ENCODE measurements at regions of chr17 and their contacts with region 1.

Region 1: GRCh38 chr17:28763804-28764266 is 20.0 kb downstream of the TRAF4 start:
- DNase-seq: peak; percentile 61 to 85 (median 76)
- ATAC-seq: peak; percentile 89
- H3K4me3 ChIP-seq: no peak overlapping the region
- H3K4me3 Mint-ChIP-seq: no peak overlapping the region
- H3K27ac ChIP-seq: no peak overlapping the region
- H3K27ac Mint-ChIP-seq: peak overlapping the region; percentile 7
- H3K4me1 ChIP-seq: no peaks in the 10 kb centered on the region
- H3K4me1 Mint-ChIP-seq: peaks cover 8% of the 10 kb centered on the region
- H3K27me3 ChIP-seq: no peaks in the 10 kb centered on the region
- H3K27me3 Mint-ChIP-seq: no peaks in the 10 kb centered on the region
- CTCF ChIP-seq: peak; percentile 97

Region 2: DNA sequence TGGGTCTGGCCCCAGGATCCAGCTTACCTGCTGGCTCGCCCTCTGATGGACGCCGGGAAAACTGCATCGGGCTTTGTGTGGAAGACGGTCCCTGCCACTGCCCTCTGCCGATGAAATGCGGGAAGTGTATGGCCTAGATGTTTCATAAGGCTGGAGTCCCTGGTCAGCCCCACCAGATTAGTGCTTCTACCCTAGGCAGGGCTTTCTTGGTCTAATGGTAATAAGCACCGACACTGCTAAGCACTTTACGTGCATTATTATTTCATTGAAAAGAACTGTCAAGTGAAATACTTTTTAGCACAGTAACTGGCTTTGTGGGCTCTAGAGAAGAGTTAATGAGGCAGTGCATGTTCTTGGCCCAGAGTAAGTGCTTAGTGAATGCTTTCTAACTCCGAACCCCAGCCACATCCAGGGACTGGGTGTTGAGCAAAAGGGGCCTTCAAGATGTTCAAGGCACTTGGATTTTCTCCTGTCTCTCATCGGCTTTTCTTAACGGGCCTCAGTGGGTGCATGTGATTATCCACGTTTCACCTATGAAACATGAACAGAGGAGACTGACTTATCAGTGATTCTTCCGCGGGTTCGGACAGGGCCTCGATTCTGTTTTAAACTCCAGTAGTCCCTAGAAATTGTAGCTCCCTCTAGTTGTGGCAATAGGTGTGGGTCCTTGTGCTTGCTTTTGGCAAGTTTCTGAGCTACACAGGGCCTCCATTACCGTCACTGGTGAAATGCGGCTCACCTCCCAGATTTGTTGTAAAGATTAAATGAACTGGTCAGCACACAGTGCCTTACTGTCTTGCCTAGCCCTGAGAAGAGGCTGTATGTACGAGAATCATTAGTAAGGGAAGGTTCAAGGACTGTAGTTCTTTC is 13.4 kb before region 1 on chr17:
- CTCF ChIA-PET with region 1: interaction called, 24 read pairs
- POLR2A ChIA-PET with region 1: no interaction called
- intact Hi-C with region 1: no loop called
- DNase-seq: peak; percentile 82 to 94 (median 86)
- ATAC-seq: peak; percentile 90
- H3K4me3 ChIP-seq: no peak overlapping the region
- H3K4me3 Mint-ChIP-seq: peak overlapping the region; percentile 42
- H3K27ac ChIP-seq: no peak overlapping the region
- H3K27ac Mint-ChIP-seq: peak overlapping the region; percentile 70
- H3K4me1 ChIP-seq: peaks cover 27% of the 10 kb centered on the region
- H3K4me1 Mint-ChIP-seq: peaks cover 21% of the 10 kb centered on the region
- H3K27me3 ChIP-seq: no peaks in the 10 kb centered on the region
- H3K27me3 Mint-ChIP-seq: no peaks in the 10 kb centered on the region
- CTCF ChIP-seq: peak; percentile 100

Region 3: GRCh38 chr17:28842282-28843012 is 78.6 kb after region 1 on chr17 and contains the start of gene FAM222B:
- CTCF ChIA-PET with region 1: interaction called, 30 read pairs
- POLR2A ChIA-PET with region 1: interaction called, 5 read pairs
- intact Hi-C with region 1: loop called (anchors 2 to 5 kb)
- DNase-seq: peak; percentile 70 to 94 (median 83)
- ATAC-seq: peak; percentile 97
- H3K4me3 ChIP-seq: peak within 1 kb of the TSS; percentile 99
- H3K4me3 Mint-ChIP-seq: peak within 1 kb of the TSS; percentile 100
- H3K27ac ChIP-seq: peak within 1 kb of the TSS; percentile 78 to 80
- H3K27ac Mint-ChIP-seq: peak within 1 kb of the TSS; percentile 91
- H3K4me1 ChIP-seq: peaks cover 20% of the 10 kb centered on the region
- H3K4me1 Mint-ChIP-seq: peaks cover 27% of the 10 kb centered on the region
- H3K27me3 ChIP-seq: no peaks in the 10 kb centered on the region
- H3K27me3 Mint-ChIP-seq: no peaks in the 10 kb centered on the region
- CTCF ChIP-seq: no peak
- total RNA-seq, gene FAM222B: 17.3 to 17.5 TPM

Region 4: DNA sequence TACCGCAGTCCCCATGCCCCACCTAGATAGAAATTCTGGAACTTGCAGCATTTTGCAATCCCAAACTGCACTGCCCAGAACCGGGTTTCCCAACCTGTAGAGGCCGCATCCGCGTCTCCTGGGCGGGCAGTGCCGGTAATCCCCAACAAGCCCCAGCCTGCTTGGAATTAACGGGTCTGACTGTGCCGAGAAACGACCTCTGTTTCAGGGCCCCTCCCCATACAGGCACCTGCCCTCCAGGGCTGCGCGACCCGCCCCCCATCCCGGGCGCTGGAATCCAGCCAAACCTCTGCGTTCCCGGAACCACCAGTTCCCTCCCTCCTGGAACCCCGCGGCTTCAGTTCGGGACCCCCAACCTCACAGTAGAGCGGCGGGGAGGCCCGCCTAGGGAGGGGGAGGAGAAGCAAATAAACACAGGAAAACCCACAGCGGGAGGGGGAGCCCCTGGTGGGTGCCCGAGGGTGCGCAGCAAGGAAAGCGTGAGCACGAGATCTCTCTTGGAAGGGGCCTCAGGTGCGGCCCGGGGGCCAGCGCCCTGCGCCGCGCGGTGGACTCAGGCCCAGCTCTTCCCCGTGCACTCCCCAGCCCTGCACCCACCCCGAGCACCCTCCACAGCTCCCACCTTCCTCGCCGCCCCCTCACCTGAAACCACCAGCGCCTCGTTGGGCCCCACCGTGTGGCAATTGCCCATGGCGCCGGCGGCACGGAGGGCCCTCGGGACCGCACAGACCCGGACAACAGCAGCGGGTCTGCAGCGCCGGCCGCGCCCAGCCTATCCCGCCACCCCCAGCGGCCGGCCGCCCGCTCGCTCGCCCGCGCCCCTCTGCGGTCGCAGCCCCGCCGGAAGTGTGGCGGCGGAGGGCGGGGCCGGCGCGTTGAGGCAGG is 133.3 kb after region 1 on chr17 and contains the start of gene FLOT2:
- CTCF ChIA-PET with region 1: interaction called, 19 read pairs
- POLR2A ChIA-PET with region 1: interaction called, 10 read pairs
- intact Hi-C with region 1: loop called (anchors 2 to 5 kb)
- DNase-seq: peak; percentile 50 to 83 (median 68)
- ATAC-seq: peak; percentile 79
- H3K4me3 ChIP-seq: peak within 1 kb of the TSS; percentile 83
- H3K4me3 Mint-ChIP-seq: peak within 1 kb of the TSS; percentile 93
- H3K27ac ChIP-seq: peak within 1 kb of the TSS; percentile 86 to 87
- H3K27ac Mint-ChIP-seq: peak within 1 kb of the TSS; percentile 95
- H3K4me1 ChIP-seq: peaks cover 75% of the 10 kb centered on the region
- H3K4me1 Mint-ChIP-seq: peaks cover 66% of the 10 kb centered on the region
- H3K27me3 ChIP-seq: no peaks in the 10 kb centered on the region
- H3K27me3 Mint-ChIP-seq: no peaks in the 10 kb centered on the region
- CTCF ChIP-seq: peak; percentile 60
- total RNA-seq, gene FLOT2: 79.7 to 85.1 TPM

Region 5: DNA sequence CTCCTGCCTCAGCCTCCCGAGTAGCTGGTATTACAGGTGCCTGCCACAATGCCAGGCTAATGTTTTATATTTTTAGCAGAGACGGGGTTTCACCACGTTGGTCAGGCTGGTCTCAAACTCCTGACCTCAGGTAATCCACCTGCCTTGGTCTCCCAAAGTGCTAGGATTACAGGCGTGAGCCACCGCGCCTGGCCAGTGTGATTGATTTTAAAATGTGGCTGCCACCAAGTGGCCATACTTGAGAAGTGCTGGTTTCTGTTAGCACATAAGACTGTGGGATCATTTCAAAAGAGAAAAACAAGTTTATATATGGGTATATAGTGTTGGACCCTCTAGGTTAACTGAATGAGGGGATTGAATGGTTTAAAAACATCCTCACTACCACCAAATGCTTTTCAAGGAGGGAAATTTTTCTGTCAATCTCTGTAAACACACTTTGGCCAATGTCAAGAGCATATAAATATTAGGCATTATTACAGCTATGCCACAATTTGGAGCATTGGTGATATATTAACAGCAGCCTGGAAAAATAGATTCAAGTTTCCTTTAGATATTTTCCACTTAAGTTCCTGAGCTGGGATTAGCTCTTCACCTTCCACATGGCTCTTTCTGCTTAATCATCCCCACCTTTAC is 152.6 kb after region 1 on chr17:
- CTCF ChIA-PET with region 1: interaction called, 3 read pairs
- POLR2A ChIA-PET with region 1: no interaction called
- intact Hi-C with region 1: loop called (anchors 1 kb)
- DNase-seq: peak in 12 of 14 experiments; percentile 22 to 72 (median 38)
- ATAC-seq: peak; percentile 86
- H3K4me3 ChIP-seq: no peak overlapping the region
- H3K4me3 Mint-ChIP-seq: no peak overlapping the region
- H3K27ac ChIP-seq: no peak overlapping the region
- H3K27ac Mint-ChIP-seq: peak overlapping the region; percentile 34
- H3K4me1 ChIP-seq: no peaks in the 10 kb centered on the region
- H3K4me1 Mint-ChIP-seq: peaks cover 8% of the 10 kb centered on the region
- H3K27me3 ChIP-seq: no peaks in the 10 kb centered on the region
- H3K27me3 Mint-ChIP-seq: no peaks in the 10 kb centered on the region
- CTCF ChIP-seq: peak; percentile 85

Measured in CD4-positive, alpha-beta T cell (primary cell).